AG04450 (cell line): ENCODE measurements at regions of chr20 and their contacts with region 1.

Region 1: DNA sequence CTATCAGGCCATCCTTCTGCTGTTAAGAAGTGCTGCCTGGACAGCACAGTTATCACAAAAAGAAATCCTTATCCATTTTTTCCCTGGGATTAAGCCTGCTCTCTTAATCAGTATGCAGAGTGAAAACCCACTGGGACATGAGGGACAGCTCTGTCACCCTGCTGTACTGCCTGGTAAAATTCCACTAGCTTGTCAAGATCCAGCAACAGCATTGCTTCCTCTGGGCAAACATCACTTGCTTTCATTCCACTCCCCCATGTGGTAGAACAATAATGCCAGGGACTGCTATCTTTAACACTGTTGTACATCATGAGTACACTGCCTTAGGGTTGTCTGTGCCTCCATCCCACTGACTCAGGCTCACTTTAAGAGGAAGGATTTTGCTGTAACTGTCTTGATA is 331.3 kb downstream of the KIF16B start:
- DNase-seq: no peak
- H3K4me3 ChIP-seq: no peak overlapping the region
- H3K27ac ChIP-seq: no peak overlapping the region
- H3K27me3 ChIP-seq: no peaks in the 10 kb centered on the region
- CTCF ChIP-seq: no peak

Region 2: DNA sequence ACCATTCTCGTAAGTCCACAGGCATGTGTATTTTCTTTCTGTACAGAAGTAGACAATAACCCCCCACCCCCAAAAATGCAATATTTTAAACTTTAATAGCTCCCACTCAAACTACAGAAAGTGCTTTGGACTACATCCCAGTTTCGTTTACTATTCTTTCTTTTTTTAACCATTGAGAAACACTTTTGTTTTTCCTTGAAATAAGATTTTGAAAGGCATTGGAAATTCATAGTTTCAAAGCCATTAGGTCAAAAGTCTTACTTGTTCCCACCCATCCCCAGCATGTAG is 191.3 kb after region 1 on chr20:
- CTCF ChIA-PET with region 1: interaction called, 11 read pairs
- POLR2A ChIA-PET with region 1: no interaction called
- DNase-seq: no peak
- H3K4me3 ChIP-seq: no peak overlapping the region
- H3K27ac ChIP-seq: no peak overlapping the region
- H3K27me3 ChIP-seq: no peaks in the 10 kb centered on the region
- CTCF ChIP-seq: no peak